ENCODE measurements at regions of chr19 and their contacts with region 1.

Region 1: GRCh38 chr19:37906869-37907734 is at the start of gene SIPA1L3:
- DNase-seq: peak; percentile 97
- ATAC-seq: peak; percentile 97
- H3K4me3 Mint-ChIP-seq: peak within 1 kb of the TSS; percentile 70
- H3K27ac Mint-ChIP-seq: peak within 1 kb of the TSS; percentile 85
- H3K4me1 Mint-ChIP-seq: peaks cover 20% of the 10 kb centered on the region
- H3K27me3 Mint-ChIP-seq: no peaks in the 10 kb centered on the region
- CTCF ChIP-seq: no peak
- total RNA-seq, gene SIPA1L3: 8.9 to 9.8 TPM

Region 2: DNA sequence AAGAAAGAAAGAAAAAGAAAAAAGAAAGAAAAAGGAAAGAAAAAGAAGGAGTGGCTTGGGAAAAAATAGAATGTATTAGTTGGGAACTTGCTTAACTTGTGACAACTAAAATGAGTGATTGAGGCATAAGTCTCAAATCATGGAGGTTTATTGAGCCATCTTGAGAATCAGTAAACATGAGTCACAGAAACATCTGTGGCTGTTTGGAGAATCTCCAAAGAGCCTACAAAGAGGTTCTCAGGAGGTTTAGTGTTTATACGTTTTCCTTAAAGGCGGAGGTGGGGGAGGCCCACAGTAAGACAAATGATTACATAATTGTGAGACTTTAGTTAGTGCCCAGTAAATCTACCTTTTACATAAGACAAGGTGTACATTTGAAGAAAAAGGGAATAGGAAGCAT is 39.3 kb before region 1 on chr19:
- CTCF ChIA-PET with region 1: no interaction called
- POLR2A ChIA-PET with region 1: no interaction called
- intact Hi-C with region 1: no loop called
- DNase-seq: no peak
- ATAC-seq: no peak
- H3K4me3 Mint-ChIP-seq: no peak overlapping the region
- H3K27ac Mint-ChIP-seq: no peak overlapping the region
- H3K4me1 Mint-ChIP-seq: no peaks in the 10 kb centered on the region
- H3K27me3 Mint-ChIP-seq: peaks cover 7% of the 10 kb centered on the region
- CTCF ChIP-seq: no peak

Region 3: DNA sequence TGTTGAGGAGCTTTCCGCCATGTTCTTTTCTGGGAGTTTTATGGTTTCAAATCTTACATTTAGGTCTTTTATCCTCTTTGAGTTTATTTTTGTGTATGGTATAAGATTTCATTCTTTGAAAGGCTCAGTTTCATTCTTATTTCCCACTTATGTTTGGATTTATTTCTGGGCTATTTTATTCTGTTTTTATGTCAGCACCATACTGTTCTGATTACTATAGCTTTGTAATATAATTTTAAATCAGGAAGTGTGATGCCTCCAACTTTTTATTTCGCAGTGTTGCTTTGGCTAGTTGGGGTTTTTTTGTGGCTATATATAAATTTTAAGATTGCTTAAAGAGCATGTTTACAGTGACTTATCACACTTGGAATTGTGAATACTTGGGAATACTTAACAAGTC is 135.0 kb after region 1 on chr19:
- CTCF ChIA-PET with region 1: interaction called, 12 read pairs
- POLR2A ChIA-PET with region 1: no interaction called
- intact Hi-C with region 1: loop called (anchors 10 kb)
- DNase-seq: no peak
- ATAC-seq: no peak
- H3K4me3 Mint-ChIP-seq: no peak overlapping the region
- H3K27ac Mint-ChIP-seq: no peak overlapping the region
- H3K4me1 Mint-ChIP-seq: peaks cover 22% of the 10 kb centered on the region
- H3K27me3 Mint-ChIP-seq: no peaks in the 10 kb centered on the region
- CTCF ChIP-seq: no peak

Region 4: DNA sequence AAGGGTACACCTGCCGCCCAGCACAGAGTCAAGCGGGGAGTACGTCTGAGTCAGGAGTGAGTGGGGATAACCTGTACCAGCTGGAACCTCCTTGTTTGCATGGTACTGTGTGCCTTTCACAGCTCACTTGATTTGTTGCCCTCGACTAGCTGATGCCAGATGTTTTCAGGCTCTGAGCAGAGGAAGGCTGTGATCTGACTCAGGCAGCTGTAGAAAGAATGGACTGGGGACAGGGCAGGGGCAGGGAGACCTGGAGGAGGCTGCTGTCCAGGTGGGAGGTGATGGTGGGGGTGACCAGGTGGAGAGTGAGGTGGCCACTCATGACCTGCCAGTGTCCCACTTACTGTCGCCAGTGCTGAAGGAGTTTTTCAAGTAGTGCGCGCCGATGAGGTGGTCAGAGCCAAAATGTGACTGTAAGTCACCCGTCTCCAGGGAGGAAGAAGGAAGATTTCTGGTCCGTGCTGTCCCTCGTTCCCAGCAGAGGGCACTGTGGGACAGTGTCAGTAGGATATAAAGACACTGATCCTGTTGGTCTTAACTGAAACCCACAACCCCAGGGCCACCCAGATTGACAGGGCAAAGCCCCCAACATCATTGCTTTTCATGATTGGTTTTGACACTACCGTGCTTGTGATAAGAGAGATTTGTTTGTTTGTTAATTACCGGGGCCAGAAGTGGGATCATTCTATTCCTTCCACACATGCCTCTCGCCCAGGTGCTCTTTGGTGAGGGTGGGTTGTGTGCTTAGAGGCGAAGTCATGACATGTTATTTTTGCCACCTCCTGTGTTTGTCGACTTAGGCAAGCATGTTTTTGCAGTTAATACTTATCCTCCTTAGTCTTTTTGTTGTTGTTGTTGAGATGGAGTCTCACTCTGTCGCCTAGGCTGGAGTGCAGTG is 188.6 kb after region 1 on chr19:
- CTCF ChIA-PET with region 1: interaction called, 15 read pairs
- POLR2A ChIA-PET with region 1: no interaction called
- intact Hi-C with region 1: no loop called
- DNase-seq: peak; percentile 74
- ATAC-seq: peak; percentile 70
- H3K4me3 Mint-ChIP-seq: no peak overlapping the region
- H3K27ac Mint-ChIP-seq: no peak overlapping the region
- H3K4me1 Mint-ChIP-seq: peaks cover 2% of the 10 kb centered on the region
- H3K27me3 Mint-ChIP-seq: no peaks in the 10 kb centered on the region
- CTCF ChIP-seq: peak; percentile 64

Region 5: DNA sequence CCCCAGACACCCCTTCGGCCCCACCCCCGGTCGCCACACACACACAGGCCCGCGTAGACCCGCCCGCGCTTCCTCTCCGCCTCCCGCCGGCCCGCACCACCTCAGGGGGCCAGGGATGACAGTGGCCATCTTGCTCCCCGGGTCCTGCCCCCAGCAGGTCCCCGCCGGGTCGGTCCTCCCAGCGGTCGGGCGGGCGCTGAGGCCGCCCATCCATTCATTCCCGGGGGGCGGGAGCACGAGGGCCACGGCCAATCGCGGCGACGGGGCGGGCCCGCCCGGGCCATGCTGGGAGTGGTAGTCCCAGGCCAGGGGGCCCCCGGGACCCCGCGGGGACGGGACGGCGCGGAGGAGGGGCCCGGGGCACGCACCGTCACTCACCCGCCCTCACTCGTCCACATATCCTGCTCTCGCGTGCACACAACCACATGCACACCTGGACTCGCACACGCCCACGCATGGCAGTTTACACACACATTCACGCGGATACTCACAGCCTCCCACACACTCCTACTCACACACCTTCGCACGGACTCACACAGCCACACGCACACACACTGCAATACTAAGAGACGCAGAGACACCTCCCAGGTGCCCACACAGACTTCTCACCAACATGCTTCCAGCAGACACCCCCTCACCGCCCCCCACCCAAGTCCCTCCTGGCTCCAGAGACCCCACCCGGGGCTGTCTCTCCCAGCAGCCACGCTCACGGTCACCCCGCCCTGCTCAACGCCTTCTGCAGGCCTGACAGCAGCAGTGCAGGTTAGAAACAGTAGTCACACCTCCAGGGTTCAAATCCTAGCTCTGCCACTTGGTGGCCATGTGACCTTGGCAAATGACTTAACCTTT is 317.1 kb after region 1 on chr19 and contains the start of gene DPF1:
- CTCF ChIA-PET with region 1: interaction called, 17 read pairs
- POLR2A ChIA-PET with region 1: no interaction called
- intact Hi-C with region 1: loop called (anchors 10 kb)
- DNase-seq: peak; percentile 77
- ATAC-seq: peak; percentile 87
- H3K4me3 Mint-ChIP-seq: peak within 1 kb of the TSS; percentile 62
- H3K27ac Mint-ChIP-seq: no peak within 1 kb of the TSS
- H3K4me1 Mint-ChIP-seq: peaks cover 16% of the 10 kb centered on the region
- H3K27me3 Mint-ChIP-seq: peaks cover 57% of the 10 kb centered on the region
- CTCF ChIP-seq: peak; percentile 45
- total RNA-seq, gene DPF1: 0.47 to 1.0 TPM

Region 6: DNA sequence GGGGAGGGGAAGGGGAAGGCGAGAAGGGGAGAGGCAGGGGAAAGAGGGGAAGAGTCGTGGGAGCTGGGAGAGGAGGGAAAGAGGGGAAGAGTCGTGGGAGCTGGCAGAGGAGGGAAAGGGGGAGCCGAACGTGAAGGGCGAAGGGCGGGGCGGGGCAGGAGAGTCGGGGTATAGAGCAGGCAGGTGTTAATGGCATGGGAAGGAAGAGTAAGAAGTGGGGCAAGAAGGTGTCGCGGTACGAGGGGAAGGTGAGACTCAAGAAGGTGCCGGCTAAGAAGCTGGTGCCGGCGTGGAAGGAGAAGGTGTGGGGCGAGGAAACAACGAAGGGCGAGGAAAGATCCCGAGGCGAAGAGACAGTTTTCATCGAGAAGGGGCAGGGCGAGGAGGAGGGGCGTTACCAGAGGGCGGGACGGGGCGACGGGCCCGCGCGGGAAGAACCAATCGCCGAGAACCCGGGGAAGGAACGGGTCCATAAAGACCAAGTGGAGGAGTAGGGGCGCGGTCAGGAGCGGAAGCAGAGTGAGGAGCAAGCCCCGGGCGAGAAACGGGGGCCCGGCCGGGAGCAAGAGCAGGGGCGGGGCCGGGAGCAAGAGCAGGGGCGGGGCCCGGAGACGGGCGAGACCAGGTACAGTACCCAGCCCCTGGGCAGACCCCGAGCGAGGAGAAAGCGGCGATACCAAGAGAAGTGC is 429.0 kb after region 1 on chr19:
- CTCF ChIA-PET with region 1: interaction called, 5 read pairs
- POLR2A ChIA-PET with region 1: no interaction called
- intact Hi-C with region 1: loop called (anchors 10 kb)
- DNase-seq: peak; percentile 97
- ATAC-seq: peak; percentile 71
- H3K4me3 Mint-ChIP-seq: peak overlapping the region; percentile 87
- H3K27ac Mint-ChIP-seq: peak overlapping the region; percentile 97
- H3K4me1 Mint-ChIP-seq: peaks cover 12% of the 10 kb centered on the region
- H3K27me3 Mint-ChIP-seq: no peaks in the 10 kb centered on the region
- CTCF ChIP-seq: no peak

Measured in activated CD8-positive, alpha-beta T cell treated with anti-CD3 and anti-CD28 coated beads for 36 hours (primary cell).